Psoas muscle (tissue), 8 donors: ENCODE measurements at regions of chr17 and their contacts with region 1.

Region 1: GRCh38 chr17:8222630-8223356 is 12.4 kb upstream of the AURKB start:
- DNase-seq: peak; percentile 95 to 97
- ATAC-seq: peak; percentile 63 to 74 (median 69)
- H3K4me3 ChIP-seq: peak overlapping the region; percentile 88
- H3K27ac ChIP-seq: peak overlapping the region; percentile 93
- H3K4me1 ChIP-seq: peaks cover 15% of the 10 kb centered on the region
- H3K27me3 ChIP-seq: no peaks in the 10 kb centered on the region
- CTCF ChIP-seq: no peak

Region 2: GRCh38 chr17:8073627-8074484 is 148.9 kb before region 1 on chr17:
- intact Hi-C with region 1: no loop called
- DNase-seq: peak; percentile 72 to 87
- ATAC-seq: peak; percentile 74 to 89 (median 76)
- H3K4me3 ChIP-seq: no peak overlapping the region
- H3K27ac ChIP-seq: no peak overlapping the region
- H3K4me1 ChIP-seq: peaks cover 10% of the 10 kb centered on the region
- H3K27me3 ChIP-seq: peaks cover 0 to 79% (median 27%) of the 10 kb centered on the region in 3 donors
- CTCF ChIP-seq: peak; percentile 81

Region 3: DNA sequence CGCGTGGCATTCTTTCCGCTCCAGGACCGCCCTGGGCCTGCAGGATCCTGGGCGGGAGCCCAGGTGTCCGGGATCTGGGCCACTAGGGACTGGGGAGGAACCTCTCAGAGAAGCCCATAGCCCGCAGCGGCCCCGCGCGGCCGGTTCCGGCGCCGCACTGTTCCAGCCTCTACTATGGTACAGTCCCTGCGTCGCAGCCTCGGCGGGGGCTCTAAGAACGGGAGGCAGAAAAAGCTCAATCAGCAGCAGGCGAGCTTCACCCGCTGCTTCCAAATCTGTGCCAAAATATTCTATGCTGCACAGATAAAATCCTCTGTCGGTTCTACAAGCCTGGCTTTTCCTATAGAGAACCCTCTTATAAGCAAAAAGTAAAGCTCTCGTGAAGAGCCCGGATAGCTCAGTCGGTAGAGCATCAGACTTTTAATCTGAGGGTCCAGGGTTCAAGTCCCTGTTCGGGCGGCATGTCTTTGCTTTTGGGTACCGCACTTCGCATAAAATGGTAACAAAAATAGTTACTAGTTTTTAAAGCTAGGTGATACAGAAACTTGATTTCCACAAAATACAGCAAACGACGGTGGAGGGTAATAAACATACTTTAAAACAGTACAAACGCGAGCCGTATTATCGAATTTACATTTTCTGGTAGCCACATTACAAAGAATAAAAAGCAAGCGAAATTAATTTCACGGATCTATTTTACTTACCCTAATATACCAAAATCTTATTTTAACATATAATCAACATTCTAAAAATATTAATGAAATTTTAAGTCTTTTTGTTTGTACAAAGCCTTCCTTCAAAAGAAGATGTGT is 103.8 kb before region 1 on chr17:
- intact Hi-C with region 1: loop called in 1 of 2 experiments (anchors 1 kb)
- DNase-seq: peak; percentile 90 to 94
- ATAC-seq: peak; percentile 78 to 82 (median 79)
- H3K4me3 ChIP-seq: peak overlapping the region; percentile 77
- H3K27ac ChIP-seq: peak overlapping the region; percentile 71
- H3K4me1 ChIP-seq: peaks cover 24% of the 10 kb centered on the region
- H3K27me3 ChIP-seq: peaks cover 0 to 46% (median 12%) of the 10 kb centered on the region in 3 donors
- CTCF ChIP-seq: peak; percentile 88

Region 4: DNA sequence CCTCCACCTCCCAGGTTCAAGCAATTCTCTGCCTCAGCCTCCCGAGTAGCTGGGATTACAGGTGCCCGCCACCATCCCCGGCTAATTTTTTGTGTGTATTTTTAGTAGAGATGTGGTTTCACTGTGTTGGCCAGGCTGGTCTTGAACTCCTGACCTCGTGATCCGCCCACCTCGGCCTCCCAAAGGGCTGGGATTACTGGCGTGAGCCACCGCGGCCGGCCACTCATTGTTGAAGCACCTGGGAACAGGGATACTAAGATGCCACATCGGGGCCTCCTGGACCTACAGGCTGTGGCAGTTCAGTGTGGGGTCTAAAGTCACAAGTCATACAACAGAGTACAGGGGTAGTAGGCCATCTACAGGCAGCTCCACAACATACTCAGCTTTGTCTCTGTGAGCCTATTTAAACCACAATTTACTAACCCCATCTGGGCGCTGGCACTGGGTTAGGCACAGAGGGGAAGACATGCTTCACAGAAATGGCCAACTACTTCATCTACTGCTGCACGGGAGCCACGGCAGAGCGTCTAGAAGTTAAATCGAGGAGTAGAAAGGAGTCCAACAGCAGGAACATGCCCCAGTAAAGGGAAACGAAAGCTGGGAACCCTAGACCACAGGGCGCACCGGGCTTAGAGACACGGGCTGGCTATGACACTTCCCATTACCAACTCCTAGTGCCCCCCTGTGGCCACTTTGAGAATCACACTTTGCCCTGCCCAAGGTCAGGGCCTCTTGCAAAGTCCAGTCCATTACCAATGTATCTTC is 64.3 kb before region 1 on chr17:
- intact Hi-C with region 1: no loop called
- DNase-seq: peak; percentile 92 to 96
- ATAC-seq: peak; percentile 16 to 23 (median 21)
- H3K4me3 ChIP-seq: peak overlapping the region; percentile 17
- H3K27ac ChIP-seq: peak overlapping the region; percentile 100
- H3K4me1 ChIP-seq: peaks cover 25% of the 10 kb centered on the region
- H3K27me3 ChIP-seq: no peaks in the 10 kb centered on the region
- CTCF ChIP-seq: peak; percentile 96

Region 5: DNA sequence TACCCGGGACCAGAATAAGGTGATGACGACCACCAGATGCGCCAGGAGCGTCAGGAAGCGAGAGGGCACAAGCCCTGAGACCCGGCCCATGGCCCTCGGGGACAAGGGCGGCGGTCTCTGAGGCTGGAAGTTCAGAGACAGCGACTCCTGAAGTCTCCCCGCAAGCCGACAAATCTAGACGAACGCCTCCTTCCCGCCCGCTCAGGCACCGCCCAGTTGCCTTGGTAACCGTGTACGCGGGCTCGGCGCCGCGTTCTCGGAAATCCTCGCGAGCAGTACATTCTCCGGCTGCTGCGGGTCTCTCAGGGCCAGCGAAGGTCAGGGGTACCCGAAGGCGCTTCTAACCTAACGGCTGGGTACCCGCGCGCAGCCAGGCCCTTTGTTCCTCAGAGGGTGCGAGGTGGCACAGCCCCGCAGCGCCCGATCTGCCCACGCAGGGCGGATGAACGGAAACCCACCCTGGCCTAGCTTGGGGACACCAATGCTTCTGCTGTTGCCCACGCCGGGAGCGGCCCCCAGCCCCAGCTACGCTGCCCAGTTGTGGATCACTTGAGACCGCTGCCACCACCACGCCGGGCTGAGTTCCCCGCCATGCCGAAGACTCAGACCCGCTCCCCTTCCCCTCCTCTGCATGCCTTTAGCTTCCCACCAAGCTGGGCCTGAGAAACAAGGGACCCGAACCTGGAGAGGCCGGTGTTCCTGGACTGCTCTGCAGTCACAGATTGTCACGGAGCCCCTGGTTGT is 46.4 kb before region 1 on chr17 and contains the start of gene TMEM107:
- intact Hi-C with region 1: loop called in 1 of 2 experiments (anchors 5 kb)
- DNase-seq: peak; percentile 86 to 90
- ATAC-seq: peak; percentile 45 to 62 (median 48)
- H3K4me3 ChIP-seq: peak within 1 kb of the TSS; percentile 75
- H3K27ac ChIP-seq: peak within 1 kb of the TSS; percentile 37
- H3K4me1 ChIP-seq: peaks cover 12% of the 10 kb centered on the region
- H3K27me3 ChIP-seq: no peaks in the 10 kb centered on the region
- CTCF ChIP-seq: no peak
- total RNA-seq, gene TMEM107: 1.2 to 4.7 (median 2.9) TPM

Region 6: GRCh38 chr17:8248751-8249607 is 26.2 kb after region 1 on chr17 and contains the start of gene PFAS:
- intact Hi-C with region 1: loop called in 1 of 2 experiments (anchors 2 kb)
- DNase-seq: peak; percentile 97 to 98
- ATAC-seq: peak; percentile 84 to 89 (median 85)
- H3K4me3 ChIP-seq: peak within 1 kb of the TSS; percentile 88
- H3K27ac ChIP-seq: peak within 1 kb of the TSS; percentile 98
- H3K4me1 ChIP-seq: peaks cover 8% of the 10 kb centered on the region
- H3K27me3 ChIP-seq: no peaks in the 10 kb centered on the region
- CTCF ChIP-seq: no peak
- total RNA-seq, gene PFAS: 10.7 to 15.6 (median 13.3) TPM

Region 7: GRCh38 chr17:8466456-8466855 is 243.7 kb after region 1 on chr17:
- intact Hi-C with region 1: no loop called
- DNase-seq: no peak
- ATAC-seq: no peak
- H3K4me3 ChIP-seq: no peak overlapping the region
- H3K27ac ChIP-seq: peak overlapping the region; percentile 7
- H3K4me1 ChIP-seq: peaks cover 22% of the 10 kb centered on the region
- H3K27me3 ChIP-seq: no peaks in the 10 kb centered on the region
- CTCF ChIP-seq: no peak